ENCODE measurements at regions of chr17 and their contacts with region 1.

Region 1: DNA sequence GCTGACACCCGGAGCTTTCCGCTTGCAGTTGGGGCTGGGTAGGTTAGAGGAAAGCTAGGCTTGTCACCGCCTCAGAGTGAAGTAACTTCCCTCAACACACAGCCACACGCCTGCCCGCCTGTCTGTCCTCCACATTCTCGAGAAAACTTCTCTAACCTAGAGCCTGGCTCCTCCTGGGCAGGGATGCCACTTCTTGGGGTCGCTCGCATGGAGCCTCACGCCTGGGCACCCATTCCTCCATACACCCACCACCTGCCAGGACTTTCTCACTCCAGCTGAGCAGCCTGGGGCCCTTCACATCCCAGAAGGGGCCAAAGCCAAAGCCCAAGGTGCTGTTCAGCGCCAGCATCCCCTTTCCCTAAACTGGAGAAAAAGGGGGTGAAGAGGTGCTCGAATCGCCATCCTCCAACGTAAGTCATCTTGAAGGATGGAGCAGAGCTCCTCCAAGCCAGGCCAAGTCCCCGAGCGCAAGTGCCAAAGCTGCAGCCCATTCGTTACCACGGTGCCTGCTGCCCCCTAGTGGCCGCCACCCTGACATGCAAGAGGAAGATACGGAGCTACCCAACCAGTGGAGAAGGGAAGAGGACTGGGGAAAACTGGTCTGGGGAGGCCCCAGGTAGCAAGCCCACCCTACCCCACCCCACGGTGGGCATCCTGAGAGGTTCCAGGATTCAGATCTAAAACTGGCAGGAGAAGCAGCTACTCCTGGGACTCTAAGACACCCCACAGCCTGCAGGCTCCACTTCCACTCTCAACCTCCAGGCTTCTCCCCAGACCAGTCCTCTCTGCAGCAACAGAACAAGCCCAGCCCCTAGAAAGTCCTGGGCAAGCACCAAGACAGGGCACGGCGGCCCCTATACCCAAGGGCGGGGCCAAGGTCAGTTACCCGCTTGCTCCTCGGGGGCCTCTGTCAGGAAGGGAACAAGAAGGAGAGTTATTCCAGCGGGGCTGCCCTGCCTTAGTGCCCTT is 63.1 kb downstream of the MYO18A start:
- DNase-seq: peak; percentile 90
- ATAC-seq: peak; percentile 88
- H3K4me3 Mint-ChIP-seq: no peak overlapping the region
- H3K27ac Mint-ChIP-seq: no peak overlapping the region
- H3K4me1 Mint-ChIP-seq: peaks cover 5% of the 10 kb centered on the region
- H3K27me3 Mint-ChIP-seq: no peaks in the 10 kb centered on the region

Region 2: GRCh38 chr17:28967221-28968140 is 149.6 kb before region 1 on chr17:
- CTCF ChIA-PET with region 1: interaction called, 199 read pairs
- POLR2A ChIA-PET with region 1: interaction called, 6 read pairs
- intact Hi-C with region 1: loop called (anchors 1 kb)
- DNase-seq: no peak
- ATAC-seq: no peak
- H3K4me3 Mint-ChIP-seq: no peak overlapping the region
- H3K27ac Mint-ChIP-seq: no peak overlapping the region
- H3K4me1 Mint-ChIP-seq: no peaks in the 10 kb centered on the region
- H3K27me3 Mint-ChIP-seq: peaks cover 6% of the 10 kb centered on the region

Region 3: GRCh38 chr17:29019475-29020181 is 97.5 kb before region 1 on chr17:
- CTCF ChIA-PET with region 1: interaction called, 12 read pairs
- POLR2A ChIA-PET with region 1: no interaction called
- intact Hi-C with region 1: no loop called
- DNase-seq: no peak
- ATAC-seq: no peak
- H3K4me3 Mint-ChIP-seq: no peak overlapping the region
- H3K27ac Mint-ChIP-seq: no peak overlapping the region
- H3K4me1 Mint-ChIP-seq: peaks cover 2% of the 10 kb centered on the region
- H3K27me3 Mint-ChIP-seq: peaks cover 34% of the 10 kb centered on the region

Region 4: GRCh38 chr17:29102741-29103181 is 14.3 kb before region 1 on chr17:
- CTCF ChIA-PET with region 1: interaction called, 12 read pairs
- POLR2A ChIA-PET with region 1: no interaction called
- intact Hi-C with region 1: no loop called
- DNase-seq: no peak
- ATAC-seq: no peak
- H3K4me3 Mint-ChIP-seq: no peak overlapping the region
- H3K27ac Mint-ChIP-seq: no peak overlapping the region
- H3K4me1 Mint-ChIP-seq: peaks cover 11% of the 10 kb centered on the region
- H3K27me3 Mint-ChIP-seq: no peaks in the 10 kb centered on the region

Region 5: DNA sequence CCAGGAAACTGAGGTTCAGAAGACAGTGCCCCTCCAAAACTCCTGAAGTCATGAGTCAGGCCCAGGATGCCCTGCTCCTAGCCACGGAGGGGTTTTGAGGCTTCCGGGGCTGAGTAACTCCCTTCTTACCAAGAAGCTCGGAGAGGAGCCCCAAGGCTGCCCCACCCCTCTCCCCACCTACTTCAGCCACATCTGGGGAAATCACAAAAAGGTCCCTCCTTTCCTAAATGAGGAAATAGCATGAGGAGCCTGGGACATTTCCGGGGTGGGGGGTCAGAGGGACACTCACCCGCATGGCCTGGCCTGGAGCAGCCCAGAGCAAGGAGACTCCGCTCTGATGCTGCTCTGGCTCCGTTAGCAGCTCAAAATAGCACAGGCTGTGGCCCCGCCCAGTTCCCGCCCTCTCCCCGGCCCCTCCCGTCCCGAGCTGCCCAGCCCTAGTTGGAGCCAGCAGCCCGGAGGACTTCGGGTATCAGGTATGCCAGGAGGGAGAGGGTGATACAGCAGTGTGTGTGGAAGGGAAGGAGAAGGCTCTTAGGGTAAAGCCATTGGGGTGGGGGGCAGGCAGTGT is 23.0 kb after region 1 on chr17:
- CTCF ChIA-PET with region 1: interaction called, 129 read pairs
- POLR2A ChIA-PET with region 1: interaction called, 3 read pairs
- intact Hi-C with region 1: no loop called
- DNase-seq: peak; percentile 92
- ATAC-seq: peak; percentile 60
- H3K4me3 Mint-ChIP-seq: peak overlapping the region; percentile 89
- H3K27ac Mint-ChIP-seq: peak overlapping the region; percentile 97
- H3K4me1 Mint-ChIP-seq: peaks cover 74% of the 10 kb centered on the region
- H3K27me3 Mint-ChIP-seq: no peaks in the 10 kb centered on the region

Region 6: DNA sequence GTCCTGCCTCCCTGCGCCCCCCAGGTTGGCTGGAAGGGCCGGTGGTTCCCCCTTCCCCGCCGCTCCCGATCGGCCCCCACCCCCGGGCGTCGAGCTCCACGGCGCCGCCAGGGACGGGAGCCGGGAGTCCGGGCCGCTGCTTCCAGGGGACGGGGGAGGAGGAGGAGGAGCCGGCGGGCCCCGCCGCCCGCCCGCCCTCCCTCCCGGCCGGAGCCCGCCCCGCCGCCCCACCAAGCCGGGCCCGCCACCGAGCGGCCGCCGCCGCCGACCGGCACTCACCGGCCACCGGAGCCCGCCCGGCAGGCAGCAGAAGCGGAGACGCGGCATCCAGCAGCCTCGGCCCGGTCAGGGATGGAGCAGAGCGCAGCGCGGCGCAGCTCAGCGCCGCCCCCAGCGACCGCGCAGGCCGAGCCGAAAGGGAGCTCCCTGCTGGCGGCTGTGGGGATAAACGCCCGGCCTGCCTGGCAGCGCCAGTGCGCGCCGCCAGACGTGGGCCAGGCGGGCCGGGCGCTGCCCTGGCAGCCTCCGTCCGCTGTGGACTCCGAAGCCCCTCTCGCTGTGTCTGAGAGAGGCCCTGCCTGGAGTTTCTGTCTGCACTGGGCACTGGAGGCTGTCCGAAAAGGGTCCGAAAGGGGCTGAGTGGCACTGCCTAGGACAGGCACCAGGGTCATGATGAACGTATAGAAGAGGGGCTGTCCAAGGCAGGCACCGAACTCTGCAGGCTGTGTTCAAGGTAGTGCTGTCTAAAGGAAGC is 63.1 kb after region 1 on chr17 and contains the start of gene MYO18A:
- CTCF ChIA-PET with region 1: interaction called, 13 read pairs
- POLR2A ChIA-PET with region 1: interaction called, 5 read pairs
- intact Hi-C with region 1: no loop called
- DNase-seq: peak; percentile 90
- ATAC-seq: peak; percentile 93
- H3K4me3 Mint-ChIP-seq: peak within 1 kb of the TSS; percentile 23
- H3K27ac Mint-ChIP-seq: no peak within 1 kb of the TSS
- H3K4me1 Mint-ChIP-seq: peaks cover 28% of the 10 kb centered on the region
- H3K27me3 Mint-ChIP-seq: no peaks in the 10 kb centered on the region
- total RNA-seq, gene MYO18A: 31.9 to 38.2 TPM

Measured in activated CD4-positive, alpha-beta T cell treated with anti-CD3 and anti-CD28 coated beads for 36 hours (primary cell).